Aorta (tissue), 5 donors: ENCODE measurements at regions of chr3 and their contacts with region 1.

Region 1: DNA sequence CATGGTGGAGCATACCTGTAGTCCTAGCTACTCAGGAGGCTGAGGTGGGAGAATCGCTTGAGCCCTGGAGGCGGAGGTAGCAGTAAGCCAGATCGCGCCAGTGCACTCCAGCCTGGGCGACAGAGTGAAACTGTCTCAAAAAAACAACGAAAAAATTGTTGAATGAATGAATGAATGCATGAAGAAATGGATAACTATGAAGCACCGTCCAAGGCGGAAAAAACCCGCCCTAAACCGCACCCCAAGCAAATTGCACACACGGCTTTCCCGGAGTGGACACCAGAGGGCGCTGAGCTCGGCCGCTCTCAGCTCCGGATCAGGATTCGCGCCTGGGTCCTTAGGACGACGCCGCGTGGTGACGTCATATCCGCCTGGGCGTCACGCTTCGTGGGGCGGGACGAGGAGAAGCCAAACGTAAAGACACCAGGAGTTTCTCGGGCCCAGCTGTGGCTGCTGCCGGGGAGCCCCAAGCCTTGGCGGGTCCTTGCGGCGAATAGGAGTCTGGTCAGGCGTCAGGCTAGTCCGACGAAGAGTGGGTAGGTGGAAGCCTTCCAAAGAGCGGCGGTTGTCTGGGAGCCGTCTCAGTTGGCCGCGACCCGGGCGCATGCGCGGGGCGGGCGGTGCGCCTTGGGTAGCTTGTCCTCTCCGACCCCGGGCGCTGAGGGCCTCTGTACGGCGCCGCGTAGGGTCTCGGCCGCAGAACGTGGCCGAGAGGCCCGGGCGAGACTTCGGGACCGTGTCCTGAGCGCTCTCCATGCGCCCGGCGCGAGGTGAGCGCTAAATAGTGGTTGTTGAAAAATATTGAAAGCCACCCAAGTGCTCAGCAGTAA is at the starts of genes HTD2 and RPP14:
- DNase-seq: peak; percentile 99 to 100
- ATAC-seq: peak; percentile 99
- H3K4me3 ChIP-seq: peak within 1 kb of the TSS; percentile 74 to 83
- H3K27ac ChIP-seq: peak within 1 kb of the TSS; percentile 47 to 94
- H3K4me1 ChIP-seq: peaks cover 3% of the 10 kb centered on the region in 2 donors
- H3K27me3 ChIP-seq: no peaks in the 10 kb centered on the region
- total RNA-seq, gene HTD2: 6.5 to 7.8 TPM
- total RNA-seq, gene RPP14: 13.0 to 13.8 TPM

Region 2: DNA sequence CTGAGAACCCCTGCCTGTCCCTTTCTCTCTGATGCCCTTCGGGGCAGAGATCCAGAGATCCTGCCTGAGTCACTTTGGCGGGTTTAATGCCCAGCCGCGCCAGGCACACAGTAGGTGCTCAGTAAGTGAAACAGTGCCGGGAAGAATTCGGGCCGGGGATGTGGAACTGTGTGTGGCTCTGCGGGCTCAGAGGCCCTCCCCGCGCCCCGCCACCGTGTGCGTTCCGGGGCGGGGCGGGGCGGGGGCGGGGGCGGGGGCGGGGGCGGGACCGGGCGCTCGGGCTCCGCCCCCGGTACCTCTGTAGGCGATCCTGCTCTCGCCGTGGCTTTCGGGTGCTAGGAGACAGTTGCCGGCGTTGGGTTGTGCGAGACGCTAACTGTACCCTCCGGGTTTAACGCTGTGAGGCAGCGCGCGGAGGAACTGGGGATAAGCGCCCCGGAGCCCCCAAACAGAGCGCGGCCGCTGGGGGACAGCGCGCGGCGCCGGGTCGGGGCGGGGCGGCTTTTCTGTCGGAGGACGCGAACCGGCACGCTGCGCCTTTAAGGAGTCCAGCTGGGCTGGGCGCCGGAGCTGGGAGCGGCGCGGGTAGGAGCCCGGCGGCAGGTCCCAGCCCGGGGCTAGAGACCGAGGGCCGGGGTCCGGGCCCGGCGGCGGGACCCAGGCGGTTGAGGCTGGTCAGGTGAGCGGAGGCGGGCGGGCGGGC is 68.7 kb before region 1 on chr3 and contains the start of gene ABHD6:
- intact Hi-C with region 1: loop called in 1 of 2 experiments (anchors 5 kb)
- DNase-seq: peak; percentile 85 to 94
- ATAC-seq: peak; percentile 94
- H3K4me3 ChIP-seq: peak within 1 kb of the TSS; percentile 36 to 68
- H3K27ac ChIP-seq: peak within 1 kb of the TSS in 1 of 2 donors; percentile 65
- H3K4me1 ChIP-seq: no peaks in the 10 kb centered on the region
- H3K27me3 ChIP-seq: no peaks in the 10 kb centered on the region
- total RNA-seq, gene ABHD6: 7.6 to 10.4 TPM

Region 3: DNA sequence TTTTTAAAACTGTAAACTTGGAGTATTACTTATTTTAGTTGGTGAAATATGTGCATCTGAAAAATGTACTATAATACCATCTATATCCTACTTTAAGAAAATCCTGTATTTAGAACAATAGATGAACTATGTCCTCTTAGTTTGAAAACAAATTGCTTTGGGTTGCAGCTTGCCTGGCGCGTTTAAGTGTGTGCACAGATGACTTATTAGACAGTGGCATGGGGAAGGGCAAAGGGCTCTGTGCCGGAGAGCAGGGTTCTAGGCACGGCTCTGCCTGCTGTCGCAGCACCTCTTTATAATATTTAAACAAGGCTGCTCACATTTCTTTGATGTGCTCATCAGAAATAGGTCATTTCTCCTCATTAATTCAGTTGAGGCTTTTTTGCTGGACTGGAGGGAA is 36.6 kb after region 1 on chr3:
- intact Hi-C with region 1: no loop called
- DNase-seq: no peak
- ATAC-seq: no peak
- H3K4me3 ChIP-seq: no peak overlapping the region
- H3K27ac ChIP-seq: no peak overlapping the region
- H3K4me1 ChIP-seq: no peaks in the 10 kb centered on the region
- H3K27me3 ChIP-seq: no peaks in the 10 kb centered on the region